Right ventricle myocardium superior (tissue), 1 donor: ENCODE measurements at regions of chr7 and their contacts with region 1.

Region 1: GRCh38 chr7:134690016-134690415 is 43.4 kb downstream of the BPGM start:
- DNase-seq: no peak
- ATAC-seq: peak; percentile 87

Region 2: GRCh38 chr7:134747326-134747725 is 57.3 kb after region 1 on chr7:
- intact Hi-C with region 1: loop called (anchors 2 kb)
- DNase-seq: no peak
- ATAC-seq: no peak

Region 3: GRCh38 chr7:134954197-134955082 is 264.4 kb after region 1 on chr7:
- intact Hi-C with region 1: loop called (anchors 5 kb)
- DNase-seq: no peak
- ATAC-seq: peak; percentile 60

Region 4: GRCh38 chr7:135169141-135169960 is 479.3 kb after region 1 on chr7:
- intact Hi-C with region 1: loop called (anchors 5 kb)
- DNase-seq: no peak
- ATAC-seq: no peak